ENCODE measurements at regions of chr6 and their contacts with region 1.

Region 1: GRCh38 chr6:42217519-42218367 is at the start of gene MRPS10:
- DNase-seq: peak; percentile 94
- H3K4me3 Mint-ChIP-seq: peak within 1 kb of the TSS; percentile 99
- H3K27ac Mint-ChIP-seq: peak within 1 kb of the TSS; percentile 94
- H3K4me1 Mint-ChIP-seq: peaks cover 31% of the 10 kb centered on the region
- H3K27me3 Mint-ChIP-seq: no peaks in the 10 kb centered on the region
- total RNA-seq, gene MRPS10: 27.9 to 33.1 TPM

Region 2: DNA sequence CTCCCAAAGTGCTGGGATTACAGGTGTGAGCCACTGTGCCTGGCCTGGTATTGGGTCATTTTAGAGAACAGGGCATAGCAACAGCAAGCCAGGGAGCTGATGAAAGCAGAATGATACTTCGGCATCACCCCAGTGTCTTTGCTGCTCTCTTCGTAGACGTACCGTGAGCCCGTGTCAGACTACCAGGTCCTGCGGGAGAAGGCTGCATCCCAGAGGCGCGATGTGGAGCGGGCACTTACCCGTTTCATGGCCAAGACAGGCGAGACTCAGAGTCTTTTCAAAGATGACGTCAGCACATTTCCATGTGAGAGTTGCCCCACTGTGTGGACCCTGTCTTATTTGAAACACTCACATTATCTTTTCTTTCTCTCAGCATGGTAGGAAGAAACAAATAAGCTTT is 151.6 kb before region 1 on chr6:
- CTCF ChIA-PET with region 1: no interaction called
- POLR2A ChIA-PET with region 1: no interaction called
- DNase-seq: no peak
- H3K4me3 Mint-ChIP-seq: no peak overlapping the region
- H3K27ac Mint-ChIP-seq: no peak overlapping the region
- H3K4me1 Mint-ChIP-seq: no peaks in the 10 kb centered on the region
- H3K27me3 Mint-ChIP-seq: no peaks in the 10 kb centered on the region

Region 3: DNA sequence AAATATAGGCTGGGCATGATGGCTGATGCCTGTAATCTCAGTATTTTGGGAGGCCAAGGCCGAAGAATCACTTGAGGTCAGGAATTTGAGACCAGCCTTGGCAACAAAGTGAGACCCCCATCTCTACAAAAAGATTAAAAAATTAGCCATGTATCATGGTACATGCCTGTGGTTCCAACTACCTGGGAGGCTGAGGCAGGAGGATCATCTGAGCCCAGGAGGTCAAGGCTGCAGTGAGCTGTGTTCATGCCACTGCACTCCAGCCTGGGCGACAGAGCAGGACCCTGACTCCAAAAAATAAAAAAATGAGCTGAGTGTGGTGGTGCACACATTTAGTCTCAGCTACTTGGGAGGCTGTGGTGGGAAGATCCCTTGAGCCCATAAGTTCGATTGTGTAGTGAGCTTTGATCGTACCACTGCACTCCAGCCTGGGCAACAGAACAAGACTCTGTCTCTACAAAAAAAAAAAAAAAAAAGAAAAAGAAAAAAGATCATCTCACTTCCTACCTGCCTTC is 12.9 kb before region 1 on chr6:
- CTCF ChIA-PET with region 1: interaction called, 11 read pairs
- POLR2A ChIA-PET with region 1: no interaction called
- DNase-seq: no peak
- H3K4me3 Mint-ChIP-seq: no peak overlapping the region
- H3K27ac Mint-ChIP-seq: no peak overlapping the region
- H3K4me1 Mint-ChIP-seq: peaks cover 2% of the 10 kb centered on the region
- H3K27me3 Mint-ChIP-seq: no peaks in the 10 kb centered on the region

Region 4: DNA sequence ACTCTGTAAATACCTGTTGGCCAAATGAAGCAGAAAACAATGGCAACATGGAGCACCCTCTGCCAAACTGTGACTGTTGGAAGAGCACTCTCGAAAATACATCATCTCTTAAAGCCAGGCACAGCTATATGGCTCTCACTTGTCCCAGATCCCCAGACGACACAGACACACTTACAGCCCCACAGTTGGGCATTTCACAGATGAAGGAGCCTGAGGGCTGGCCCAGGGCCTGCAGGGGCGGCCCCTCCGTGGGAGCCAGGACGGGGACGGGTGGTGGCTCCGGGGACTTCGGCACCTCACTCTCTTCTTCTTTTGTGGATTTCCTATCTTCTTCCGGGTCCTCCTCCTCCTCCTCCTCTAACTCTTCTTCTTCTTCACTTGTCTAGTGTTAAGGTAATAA is 18.3 kb after region 1 on chr6:
- CTCF ChIA-PET with region 1: no interaction called
- POLR2A ChIA-PET with region 1: no interaction called
- DNase-seq: no peak
- H3K4me3 Mint-ChIP-seq: no peak overlapping the region
- H3K27ac Mint-ChIP-seq: no peak overlapping the region
- H3K4me1 Mint-ChIP-seq: no peaks in the 10 kb centered on the region
- H3K27me3 Mint-ChIP-seq: no peaks in the 10 kb centered on the region

Region 5: DNA sequence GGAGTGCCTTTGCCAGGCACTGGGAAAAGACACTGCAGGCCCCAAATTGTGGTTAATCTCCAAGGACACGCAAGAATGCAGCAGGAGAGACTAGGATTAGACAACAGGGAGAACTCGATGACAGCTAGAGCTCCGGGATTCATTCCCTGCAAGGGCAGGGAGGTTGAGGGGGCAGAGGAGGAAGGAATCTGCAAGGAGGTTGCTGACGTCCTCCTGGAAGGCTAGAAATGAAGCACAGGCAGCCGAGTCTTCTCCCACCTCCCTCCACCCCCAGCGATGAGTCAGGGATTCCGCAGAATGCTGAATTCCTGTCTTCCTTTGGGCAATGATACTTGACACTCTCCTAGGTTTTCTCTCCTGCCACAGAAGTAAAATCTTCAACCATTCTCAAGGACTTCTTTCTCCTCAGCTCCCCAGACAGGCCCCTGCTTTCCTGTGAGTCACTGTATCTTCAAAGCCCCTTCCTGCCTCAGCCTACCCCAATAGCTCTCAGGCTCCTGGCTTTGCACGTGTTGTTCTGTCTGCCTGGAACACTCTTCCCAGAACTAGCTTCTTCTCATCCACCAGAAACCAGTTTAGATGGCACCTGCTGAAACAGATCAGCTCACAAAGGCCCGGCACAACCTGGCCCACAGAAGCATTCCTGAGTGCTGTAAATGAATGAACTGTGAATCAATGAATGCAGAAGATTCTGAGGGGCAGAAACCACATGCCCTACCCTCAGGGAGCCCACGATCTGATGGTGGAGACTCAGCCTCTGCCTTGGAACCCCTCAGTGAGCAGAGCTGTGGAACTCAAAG is 1823.9 kb after region 1 on chr6:
- CTCF ChIA-PET with region 1: no interaction called
- POLR2A ChIA-PET with region 1: no interaction called
- DNase-seq: no peak
- H3K4me3 Mint-ChIP-seq: no peak overlapping the region
- H3K27ac Mint-ChIP-seq: no peak overlapping the region
- H3K4me1 Mint-ChIP-seq: peaks cover 8% of the 10 kb centered on the region
- H3K27me3 Mint-ChIP-seq: no peaks in the 10 kb centered on the region